ENCODE measurements at regions of chr10 and their contacts with region 1.

Region 1: DNA sequence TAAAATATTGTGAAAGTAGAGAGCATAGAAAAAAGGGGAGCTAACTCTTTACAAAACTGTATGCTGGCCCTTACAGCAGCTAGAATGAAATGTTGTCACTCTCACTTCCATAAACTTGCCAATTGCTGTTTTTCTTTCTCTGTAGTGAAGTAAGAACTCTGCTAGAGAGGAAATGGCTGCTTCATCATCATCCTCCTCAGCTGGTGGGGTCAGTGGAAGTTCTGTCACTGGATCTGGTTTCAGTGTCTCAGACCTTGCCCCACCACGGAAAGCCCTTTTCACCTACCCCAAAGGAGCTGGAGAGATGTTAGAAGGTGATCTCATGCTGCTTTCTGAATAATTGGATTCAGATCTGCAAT is 7.6 kb upstream of the ASCC1 start:
- DNase-seq: no peak
- H3K4me3 Mint-ChIP-seq: no peak overlapping the region
- H3K27ac Mint-ChIP-seq: peak overlapping the region; percentile 27
- H3K4me1 Mint-ChIP-seq: peaks cover 32% of the 10 kb centered on the region
- H3K27me3 Mint-ChIP-seq: no peaks in the 10 kb centered on the region

Region 2: DNA sequence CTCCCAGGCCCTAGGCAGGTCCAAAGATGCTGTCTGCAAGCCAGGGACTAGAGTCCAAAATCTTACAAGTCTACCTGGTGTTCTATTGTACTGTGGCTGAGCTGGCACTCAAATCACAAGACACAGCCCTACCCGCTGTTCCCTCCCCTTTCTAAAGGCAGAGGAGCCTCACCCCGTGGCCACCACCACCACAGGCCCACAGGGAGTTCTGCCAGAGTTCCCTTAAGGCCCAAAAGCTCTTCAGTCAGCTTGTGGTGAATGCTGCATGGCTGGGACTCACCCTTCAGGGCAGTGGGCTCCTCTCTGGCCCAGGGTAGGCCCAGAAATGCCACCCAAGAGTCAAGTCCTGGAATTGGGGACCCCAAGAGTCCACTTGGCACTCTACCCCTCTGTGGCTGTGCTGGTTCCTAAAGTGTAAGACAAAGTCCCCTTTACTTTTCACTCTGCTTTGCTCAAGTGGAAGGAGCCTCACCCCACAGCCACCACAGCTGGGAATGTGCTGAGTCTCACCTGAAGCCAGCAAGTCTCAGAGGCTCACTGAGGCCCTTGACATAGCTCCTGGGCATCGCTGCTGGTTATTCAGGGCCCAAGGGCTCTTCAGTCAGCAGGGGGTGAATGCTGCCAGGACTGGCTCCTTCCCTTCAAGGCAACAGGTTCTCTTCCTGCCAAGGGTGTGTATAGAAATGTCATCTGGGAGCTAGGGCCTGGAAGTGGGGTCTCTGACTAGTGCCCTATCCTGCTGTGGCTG is 323.9 kb before region 1 on chr10:
- intact Hi-C with region 1: loop called (anchors 5 kb)
- DNase-seq: no peak
- H3K4me3 Mint-ChIP-seq: no peak overlapping the region
- H3K27ac Mint-ChIP-seq: no peak overlapping the region
- H3K4me1 Mint-ChIP-seq: peaks cover 2% of the 10 kb centered on the region
- H3K27me3 Mint-ChIP-seq: no peaks in the 10 kb centered on the region

Region 3: DNA sequence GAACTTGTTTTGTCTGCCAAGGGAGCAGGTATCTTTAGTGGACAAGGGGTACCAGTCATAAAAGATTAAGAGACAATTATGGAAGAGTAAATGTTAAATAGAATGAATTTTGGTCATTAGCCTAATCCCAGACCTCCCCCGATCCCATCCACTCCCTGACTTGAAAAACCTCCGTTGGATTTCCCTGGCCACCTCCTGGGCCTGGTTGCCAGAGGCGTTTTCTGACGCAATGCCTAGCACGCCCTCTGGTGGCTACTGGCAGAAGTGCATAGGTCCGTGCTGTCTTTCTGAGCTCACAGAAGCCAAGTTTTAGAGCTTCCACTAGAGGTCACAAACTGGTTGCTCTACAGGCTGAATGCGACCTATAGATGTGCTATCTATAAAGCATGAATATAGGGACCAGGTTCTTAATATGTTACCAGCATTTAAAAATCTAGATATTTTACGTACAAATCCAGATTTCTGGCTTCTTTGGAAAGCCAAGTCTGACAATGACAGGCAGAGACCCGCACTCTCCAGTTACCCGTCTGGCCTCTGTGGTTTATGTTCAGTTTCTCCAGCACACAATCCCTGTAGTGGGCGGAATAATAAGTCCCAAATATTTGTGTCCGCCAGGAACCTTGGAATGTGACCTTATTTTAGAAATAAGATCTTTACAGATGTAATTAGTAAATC is 175.1 kb before region 1 on chr10:
- intact Hi-C with region 1: loop called (anchors 1 kb)
- DNase-seq: peak; percentile 95
- H3K4me3 Mint-ChIP-seq: no peak overlapping the region
- H3K27ac Mint-ChIP-seq: peak overlapping the region; percentile 72
- H3K4me1 Mint-ChIP-seq: peaks cover 6% of the 10 kb centered on the region
- H3K27me3 Mint-ChIP-seq: no peaks in the 10 kb centered on the region

Region 4: GRCh38 chr10:72133517-72133916 is 90.2 kb before region 1 on chr10:
- intact Hi-C with region 1: loop called (anchors 2 kb)
- DNase-seq: no peak
- H3K4me3 Mint-ChIP-seq: no peak overlapping the region
- H3K27ac Mint-ChIP-seq: no peak overlapping the region
- H3K4me1 Mint-ChIP-seq: peaks cover 26% of the 10 kb centered on the region
- H3K27me3 Mint-ChIP-seq: no peaks in the 10 kb centered on the region

Region 5: GRCh38 chr10:72273410-72274212 is 49.9 kb after region 1 on chr10 and contains the start of gene DDIT4:
- intact Hi-C with region 1: loop called (anchors 2 kb)
- DNase-seq: peak; percentile 100
- H3K4me3 Mint-ChIP-seq: peak within 1 kb of the TSS; percentile 96
- H3K27ac Mint-ChIP-seq: peak within 1 kb of the TSS; percentile 92
- H3K4me1 Mint-ChIP-seq: peaks cover 51% of the 10 kb centered on the region
- H3K27me3 Mint-ChIP-seq: no peaks in the 10 kb centered on the region
- total RNA-seq, gene DDIT4: 260 and 271 TPM in 2 replicates

Region 6: GRCh38 chr10:72342911-72343310 is 119.2 kb after region 1 on chr10:
- intact Hi-C with region 1: no loop called
- DNase-seq: no peak
- H3K4me3 Mint-ChIP-seq: no peak overlapping the region
- H3K27ac Mint-ChIP-seq: no peak overlapping the region
- H3K4me1 Mint-ChIP-seq: peaks cover 9% of the 10 kb centered on the region
- H3K27me3 Mint-ChIP-seq: no peaks in the 10 kb centered on the region

Measured in activated CD4-positive, alpha-beta T cell treated with anti-CD3 and anti-CD28 coated beads, Interleukin-2, amount 10 ng/mL, durations not matched to agents 24 days and 14 days (primary cell).